HEK293 (cell line): ENCODE measurements at regions of chrX and their contacts with region 1.

Region 1: DNA sequence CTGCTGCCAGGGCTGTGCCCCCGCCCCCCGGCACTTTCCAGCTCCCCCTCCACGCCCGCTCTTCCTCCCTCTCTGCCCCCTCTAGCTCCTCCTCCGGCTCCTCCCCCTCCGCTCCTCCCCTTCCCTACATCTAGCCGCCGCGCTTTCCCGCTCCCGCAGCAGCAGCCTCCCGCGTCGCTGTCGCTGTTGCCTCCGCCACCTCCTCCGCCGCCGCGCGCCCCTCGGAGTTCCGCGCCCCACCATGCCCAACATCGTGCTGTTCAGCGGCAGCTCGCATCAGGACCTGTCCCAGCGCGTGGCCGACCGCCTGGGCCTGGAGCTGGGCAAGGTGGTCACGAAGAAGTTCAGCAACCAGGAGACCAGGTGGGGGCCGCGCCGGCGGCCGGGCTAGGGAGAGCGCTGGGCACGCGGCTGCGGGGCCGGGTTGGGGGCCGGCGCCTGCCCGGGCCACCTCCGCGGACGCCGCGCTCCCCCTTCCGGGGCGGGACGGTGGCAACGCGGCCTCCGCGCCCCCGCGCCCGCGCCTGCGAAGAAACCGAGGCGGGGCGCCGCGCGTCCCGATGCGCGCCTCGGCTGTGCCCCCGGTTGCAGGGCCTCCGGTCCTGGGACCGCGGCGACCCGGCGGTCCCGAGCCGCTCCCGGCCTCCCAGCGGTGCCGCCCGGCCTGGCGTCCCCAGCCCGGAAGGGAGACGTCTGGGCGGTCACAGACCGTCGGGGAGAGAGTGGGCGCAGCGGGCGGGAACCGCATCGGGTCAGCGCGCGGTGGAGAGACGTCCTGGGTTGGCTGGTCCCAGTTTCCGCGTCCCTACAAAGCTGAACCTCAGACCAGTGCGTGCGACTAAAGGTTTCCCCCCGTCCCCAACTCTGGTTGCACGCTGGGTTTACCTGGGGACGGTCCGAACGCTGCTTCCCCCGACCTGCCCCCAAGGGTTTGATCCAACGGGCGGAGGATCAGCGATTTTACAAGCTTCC is at the start of gene PRPS2:
- H3K4me3 ChIP-seq: peak within 1 kb of the TSS; percentile 77
- H3K27ac ChIP-seq: peak within 1 kb of the TSS; percentile 72; the same call in 1 of the 2 replicates
- H3K4me1 ChIP-seq: no peaks in the 10 kb centered on the region
- CTCF ChIP-seq: peak; percentile 32; the same call in 1 of the 2 replicates

Region 2: DNA sequence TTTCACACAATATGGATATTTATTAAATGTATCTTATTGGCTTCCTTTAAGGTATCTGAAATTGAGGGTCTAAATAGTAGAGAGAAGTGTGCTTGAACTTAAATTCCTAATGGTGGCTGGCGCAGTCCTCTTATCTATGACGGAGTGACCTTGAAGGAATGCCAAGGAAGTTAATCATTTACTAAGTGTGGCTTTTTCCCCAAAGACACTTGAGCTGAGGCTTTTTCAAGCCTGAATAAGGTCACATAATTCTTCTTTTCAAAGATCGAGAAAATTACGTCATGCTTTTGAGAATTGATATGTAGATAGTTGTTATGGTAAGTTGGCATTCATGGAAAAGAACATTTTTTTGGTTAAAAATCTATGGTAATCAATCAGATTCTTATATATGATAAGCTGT is 12.0 kb before region 1 on chrX:
- CTCF ChIA-PET with region 1: interaction called, 3 read pairs
- POLR2A ChIA-PET with region 1: interaction called, 10 read pairs
- H3K4me3 ChIP-seq: no peak overlapping the region
- H3K27ac ChIP-seq: no peak overlapping the region
- H3K4me1 ChIP-seq: no peaks in the 10 kb centered on the region
- CTCF ChIP-seq: no peak

Region 3: GRCh38 chrX:12936947-12937346 is 145.4 kb after region 1 on chrX:
- CTCF ChIA-PET with region 1: no interaction called
- POLR2A ChIA-PET with region 1: no interaction called
- H3K4me3 ChIP-seq: no peak overlapping the region
- H3K27ac ChIP-seq: no peak overlapping the region
- H3K4me1 ChIP-seq: no peaks in the 10 kb centered on the region
- CTCF ChIP-seq: no peak